ENCODE measurements at regions of chr19 and their contacts with region 1.

Region 1: DNA sequence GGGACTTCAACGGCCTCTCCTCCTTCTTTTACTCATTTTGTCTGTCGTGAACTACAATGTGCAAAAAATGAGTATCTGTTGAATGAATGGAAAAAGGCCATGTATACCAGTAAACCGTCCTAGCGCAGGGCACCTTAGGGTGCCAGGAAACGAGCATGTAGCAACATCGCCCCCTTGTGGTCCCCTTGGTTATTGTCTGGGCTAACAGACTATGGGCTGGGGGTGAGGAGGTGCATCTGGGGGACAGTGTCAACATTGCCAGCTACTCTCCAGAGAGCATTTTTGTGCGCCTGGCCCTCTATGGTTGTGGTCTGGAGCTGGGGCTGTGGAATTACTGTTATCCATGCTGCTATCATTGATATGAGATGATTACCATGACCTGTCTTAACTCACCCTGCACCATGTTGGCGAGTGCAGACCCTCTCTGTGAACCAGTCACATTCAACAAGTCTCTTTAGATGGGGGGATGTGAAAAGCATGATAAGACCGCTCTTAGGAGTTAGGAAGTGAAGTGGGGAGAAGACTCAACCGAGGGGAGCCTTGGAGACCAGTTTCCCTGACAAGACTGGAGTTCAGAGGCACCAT is 22.8 kb upstream of the SIGLEC11 start:
- DNase-seq: peak; percentile 67 to 88
- ATAC-seq: peak; percentile 54 to 73 (median 60)
- H3K4me3 ChIP-seq: no peak overlapping the region
- H3K4me3 Mint-ChIP-seq: no peak overlapping the region
- H3K27ac ChIP-seq: no peak overlapping the region
- H3K27ac Mint-ChIP-seq: no peak overlapping the region
- H3K4me1 ChIP-seq: peaks cover 7% of the 10 kb centered on the region
- H3K4me1 Mint-ChIP-seq: peaks cover 9 to 19% of the 10 kb centered on the region in 2 donors
- H3K27me3 ChIP-seq: no peaks in the 10 kb centered on the region
- H3K27me3 Mint-ChIP-seq: no peaks in the 10 kb centered on the region
- CTCF ChIP-seq: peak; percentile 81

Region 2: DNA sequence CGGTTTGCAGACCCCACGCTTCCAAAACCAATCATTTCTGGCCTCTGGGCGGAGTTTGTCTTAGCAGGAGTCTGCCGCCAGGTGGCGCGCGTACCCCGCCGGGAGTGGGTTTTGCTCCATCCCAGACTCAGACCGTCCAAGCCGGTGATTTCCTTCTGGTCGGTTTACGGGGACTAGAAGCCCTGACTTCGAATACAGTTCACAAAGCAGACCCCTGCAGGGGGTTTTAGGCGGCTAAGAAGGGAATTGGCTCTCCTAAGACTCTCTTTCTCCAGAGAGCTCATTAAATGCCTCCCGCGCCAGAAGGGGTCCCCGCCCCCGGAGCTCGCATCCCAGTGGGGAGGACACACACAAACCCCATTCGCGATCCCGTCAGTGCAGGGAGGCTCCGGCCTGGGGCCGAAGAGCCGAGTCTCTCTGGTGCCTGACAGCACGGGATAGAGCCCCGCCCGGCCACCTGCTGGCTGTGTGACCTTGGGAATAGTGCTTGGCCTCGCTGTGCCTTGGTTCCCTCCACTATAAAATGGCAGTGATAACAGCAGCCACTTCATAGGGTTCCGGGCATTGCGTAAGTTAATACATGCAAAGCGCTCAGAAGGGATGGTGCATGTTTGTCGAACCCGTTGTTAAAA is 45.9 kb before region 1 on chr19:
- intact Hi-C with region 1: loop called (anchors 1 kb)
- DNase-seq: peak; percentile 81 to 86
- ATAC-seq: peak; percentile 76 to 81 (median 80)
- H3K4me3 ChIP-seq: no peak overlapping the region
- H3K4me3 Mint-ChIP-seq: no peak overlapping the region
- H3K27ac ChIP-seq: no peak overlapping the region
- H3K27ac Mint-ChIP-seq: no peak overlapping the region
- H3K4me1 ChIP-seq: peaks cover 19% of the 10 kb centered on the region
- H3K4me1 Mint-ChIP-seq: peaks cover 19 to 22% of the 10 kb centered on the region in 2 donors
- H3K27me3 ChIP-seq: no peaks in the 10 kb centered on the region
- H3K27me3 Mint-ChIP-seq: peaks cover 6% of the 10 kb centered on the region in 2 donors
- CTCF ChIP-seq: peak; percentile 98

Measured in natural killer cell (primary cell).